Mammary epithelial cell (primary cell): ENCODE measurements at regions of chr3 and their contacts with region 1.

Region 1: DNA sequence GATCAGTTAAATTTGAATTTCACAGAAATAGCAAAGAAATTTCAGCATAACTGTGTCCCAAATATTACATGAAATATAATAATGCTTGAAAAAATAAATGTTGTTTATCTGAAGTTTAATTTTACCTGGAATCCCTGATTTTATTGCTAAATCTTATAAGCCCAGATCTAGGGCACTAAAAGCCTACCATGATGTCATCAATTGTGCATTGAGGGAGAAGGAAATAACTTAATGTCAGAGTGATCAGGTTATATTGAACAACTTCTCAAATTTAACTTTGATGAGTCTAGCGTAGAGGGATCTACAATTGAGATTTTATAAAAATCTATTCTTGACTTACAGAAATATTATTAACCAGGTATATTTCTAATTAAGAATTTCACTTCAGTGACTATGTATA is 1301.1 kb upstream of the ALCAM start:
- DNase-seq: no peak
- H3K4me3 ChIP-seq: no peak overlapping the region
- H3K27ac ChIP-seq: no peak overlapping the region
- H3K4me1 ChIP-seq: no peaks in the 10 kb centered on the region
- H3K27me3 ChIP-seq: peaks cover 2% of the 10 kb centered on the region
- CTCF ChIP-seq: no peak

Region 2: GRCh38 chr3:103937094-103937493 is 128.6 kb before region 1 on chr3:
- CTCF ChIA-PET with region 1: no interaction called
- dilution Hi-C with region 1: no loop called
- in situ Hi-C with region 1: no loop called
- intact Hi-C with region 1: no loop called
- DNase-seq: no peak
- H3K4me3 ChIP-seq: no peak overlapping the region
- H3K27ac ChIP-seq: no peak overlapping the region
- H3K4me1 ChIP-seq: no peaks in the 10 kb centered on the region
- H3K27me3 ChIP-seq: no peaks in the 10 kb centered on the region
- CTCF ChIP-seq: no peak

Region 3: GRCh38 chr3:104108522-104108921 is 42.9 kb after region 1 on chr3:
- CTCF ChIA-PET with region 1: no interaction called
- dilution Hi-C with region 1: no loop called
- in situ Hi-C with region 1: no loop called
- intact Hi-C with region 1: loop called (anchors 2 kb)
- DNase-seq: no peak
- H3K4me3 ChIP-seq: no peak overlapping the region
- H3K27ac ChIP-seq: no peak overlapping the region
- H3K4me1 ChIP-seq: no peaks in the 10 kb centered on the region
- H3K27me3 ChIP-seq: peaks cover 3% of the 10 kb centered on the region
- CTCF ChIP-seq: no peak